Breast epithelium (tissue), 4 donors: ENCODE measurements at regions of chrX and their contacts with region 1.

Region 1: DNA sequence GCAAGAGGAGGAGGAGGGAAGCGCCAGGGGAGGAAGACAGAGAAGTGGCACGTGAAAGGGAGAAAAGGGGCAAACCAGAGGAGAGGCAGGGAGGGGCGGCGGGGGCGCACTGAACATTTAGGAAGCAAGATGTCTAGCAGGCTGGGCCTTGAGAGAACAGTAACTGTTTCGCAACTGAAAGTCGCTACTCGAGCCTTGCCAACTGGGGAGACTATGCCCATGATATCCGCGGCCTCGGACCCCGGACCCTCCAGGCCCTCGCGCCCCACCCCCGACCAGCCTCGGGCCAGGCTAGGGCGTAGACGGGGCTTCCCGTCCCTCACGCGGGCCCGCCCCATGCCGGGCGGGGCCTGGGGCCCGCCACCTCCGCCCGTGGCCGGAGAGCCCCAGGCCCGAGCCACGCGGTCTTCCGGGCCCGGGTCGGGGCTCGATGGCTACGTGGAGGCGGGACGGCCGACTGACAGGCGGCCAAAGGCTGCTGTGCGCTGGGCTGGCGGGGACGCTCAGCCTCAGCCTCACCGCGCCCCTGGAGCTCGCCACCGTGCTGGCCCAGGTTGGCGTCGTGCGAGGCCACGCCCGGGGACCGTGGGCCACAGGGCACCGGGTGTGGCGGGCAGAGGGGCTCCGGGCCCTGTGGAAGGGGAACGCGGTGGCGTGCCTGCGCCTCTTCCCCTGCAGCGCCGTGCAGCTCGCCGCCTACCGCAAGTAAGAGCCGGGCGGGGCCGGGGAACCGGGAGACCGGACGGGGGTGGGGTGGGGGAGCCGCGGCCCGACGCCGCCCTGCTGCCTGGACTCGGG is at the start of gene SLC25A43:
- DNase-seq: no peak
- H3K4me3 ChIP-seq: peak within 1 kb of the TSS; percentile 57 to 76 (median 65)
- H3K27ac ChIP-seq: peak within 1 kb of the TSS; percentile 86 to 88
- H3K4me1 ChIP-seq: no peaks in the 10 kb centered on the region
- H3K27me3 ChIP-seq: peaks cover 0 to 4% of the 10 kb centered on the region in 2 donors
- CTCF ChIP-seq: no peak
- POLR2A ChIP-seq: no peak
- total RNA-seq, gene SLC25A43: 16.3 to 20.5 (median 19.0) TPM

Region 2: GRCh38 chrX:118437283-118437682 is 961.9 kb before region 1 on chrX:
- intact Hi-C with region 1: no loop called
- DNase-seq: no peak
- H3K4me3 ChIP-seq: no peak overlapping the region
- H3K27ac ChIP-seq: no peak overlapping the region
- H3K4me1 ChIP-seq: no peaks in the 10 kb centered on the region
- H3K27me3 ChIP-seq: no peaks in the 10 kb centered on the region
- CTCF ChIP-seq: no peak
- POLR2A ChIP-seq: no peak

Region 3: GRCh38 chrX:119343856-119344255 is 55.3 kb before region 1 on chrX:
- intact Hi-C with region 1: loop called (anchors 2 kb)
- DNase-seq: peak in 1 of 2 donors; percentile 18
- H3K4me3 ChIP-seq: no peak overlapping the region
- H3K27ac ChIP-seq: no peak overlapping the region
- H3K4me1 ChIP-seq: no peaks in the 10 kb centered on the region
- H3K27me3 ChIP-seq: peaks cover 0 to 28% of the 10 kb centered on the region in 2 donors
- CTCF ChIP-seq: no peak
- POLR2A ChIP-seq: no peak

Region 4: GRCh38 chrX:119442286-119442685 is 43.1 kb after region 1 on chrX:
- intact Hi-C with region 1: no loop called
- DNase-seq: no peak
- H3K4me3 ChIP-seq: no peak overlapping the region
- H3K27ac ChIP-seq: no peak overlapping the region
- H3K4me1 ChIP-seq: no peaks in the 10 kb centered on the region
- H3K27me3 ChIP-seq: peaks cover 0 to 5% of the 10 kb centered on the region in 2 donors
- CTCF ChIP-seq: no peak
- POLR2A ChIP-seq: no peak

Region 5: GRCh38 chrX:119455264-119455663 is 56.1 kb after region 1 on chrX:
- intact Hi-C with region 1: loop called (anchors 2 kb)
- DNase-seq: no peak
- H3K4me3 ChIP-seq: no peak overlapping the region
- H3K27ac ChIP-seq: no peak overlapping the region
- H3K4me1 ChIP-seq: no peaks in the 10 kb centered on the region
- H3K27me3 ChIP-seq: no peaks in the 10 kb centered on the region
- CTCF ChIP-seq: no peak
- POLR2A ChIP-seq: no peak